CD8-positive, alpha-beta T cell (primary cell): ENCODE measurements at regions of chr2 and their contacts with region 1.

Region 1: GRCh38 chr2:219294356-219295351 is 14.5 kb downstream of the PTPRN start:
- DNase-seq: peak; percentile 79 to 94 (median 87)
- ATAC-seq: peak; percentile 94
- H3K4me3 ChIP-seq: peak overlapping the region; percentile 49
- H3K4me3 Mint-ChIP-seq: peak overlapping the region; percentile 72
- H3K27ac ChIP-seq: peak overlapping the region; percentile 14 to 59
- H3K27ac Mint-ChIP-seq: peak overlapping the region; percentile 86
- H3K4me1 ChIP-seq: peaks cover 39% of the 10 kb centered on the region
- H3K4me1 Mint-ChIP-seq: peaks cover 37% of the 10 kb centered on the region
- H3K27me3 ChIP-seq: peaks cover 0 to 2% of the 10 kb centered on the region in 2 experiments
- H3K27me3 Mint-ChIP-seq: peaks cover 2% of the 10 kb centered on the region
- CTCF ChIP-seq: peak; percentile 98

Region 2: GRCh38 chr2:219155054-219155644 is 139.5 kb before region 1 on chr2:
- CTCF ChIA-PET with region 1: interaction called, 101 read pairs
- POLR2A ChIA-PET with region 1: interaction called, 13 read pairs
- intact Hi-C with region 1: loop called (anchors 1 kb)
- DNase-seq: peak in 5 of 9 experiments; percentile 5 to 83 (median 52)
- ATAC-seq: peak; percentile 12
- H3K4me3 ChIP-seq: no peak overlapping the region
- H3K4me3 Mint-ChIP-seq: no peak overlapping the region
- H3K27ac ChIP-seq: no peak overlapping the region
- H3K27ac Mint-ChIP-seq: no peak overlapping the region
- H3K4me1 ChIP-seq: peaks cover 6% of the 10 kb centered on the region
- H3K4me1 Mint-ChIP-seq: peaks cover 7% of the 10 kb centered on the region
- H3K27me3 ChIP-seq: no peaks in the 10 kb centered on the region
- H3K27me3 Mint-ChIP-seq: no peaks in the 10 kb centered on the region
- CTCF ChIP-seq: peak; percentile 82

Region 3: DNA sequence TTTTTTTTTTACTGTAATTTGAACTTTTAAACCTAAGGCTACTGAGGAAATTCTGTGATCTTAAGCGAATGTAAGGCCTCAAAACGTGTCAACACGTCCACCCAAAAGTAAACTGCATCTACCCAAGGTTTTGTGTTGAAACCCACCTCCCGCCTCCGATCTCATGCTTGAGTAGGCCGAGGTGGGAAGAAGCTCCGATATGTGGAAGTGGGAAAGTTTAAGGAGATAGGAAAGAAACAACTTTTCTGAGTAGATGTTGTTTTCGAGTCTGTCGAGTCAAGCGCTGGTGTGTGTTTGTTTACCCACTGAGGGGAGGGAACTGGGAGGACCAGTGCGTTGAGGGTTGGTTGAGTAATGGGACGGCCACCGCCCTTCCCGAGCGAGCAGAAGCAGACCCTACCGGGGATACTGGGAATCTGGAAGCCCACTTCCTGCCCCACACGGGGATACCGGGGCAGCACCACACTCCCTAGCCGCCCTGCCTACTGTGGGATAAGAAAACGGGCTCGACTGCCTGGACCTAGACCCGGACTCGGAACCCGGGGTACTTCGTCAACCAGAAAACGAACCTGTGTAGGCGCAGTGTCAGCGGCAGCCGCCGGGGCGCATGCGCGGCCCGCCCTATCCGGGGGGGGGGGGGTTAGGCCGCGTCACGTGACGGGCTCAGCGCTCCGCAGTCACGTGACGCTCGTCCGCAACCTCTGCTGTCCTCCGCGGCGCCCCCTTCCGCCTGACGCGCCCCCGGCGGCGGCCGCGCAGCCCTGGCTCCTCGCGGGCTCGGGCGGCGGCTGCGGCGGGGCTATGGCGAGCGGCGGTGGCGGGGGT is 116.9 kb before region 1 on chr2 and contains the start of gene RETREG2:
- CTCF ChIA-PET with region 1: interaction called, 37 read pairs
- POLR2A ChIA-PET with region 1: interaction called, 4 read pairs
- intact Hi-C with region 1: loop called in 1 of 2 experiments (anchors 1 kb)
- DNase-seq: peak; percentile 61 to 96 (median 78)
- ATAC-seq: peak; percentile 55
- H3K4me3 ChIP-seq: peak within 1 kb of the TSS; percentile 71 to 82
- H3K4me3 Mint-ChIP-seq: peak within 1 kb of the TSS; percentile 91
- H3K27ac ChIP-seq: peak within 1 kb of the TSS; percentile 97 to 98
- H3K27ac Mint-ChIP-seq: peak within 1 kb of the TSS; percentile 99
- H3K4me1 ChIP-seq: peaks cover 75% of the 10 kb centered on the region
- H3K4me1 Mint-ChIP-seq: peaks cover 75% of the 10 kb centered on the region
- H3K27me3 ChIP-seq: no peaks in the 10 kb centered on the region
- H3K27me3 Mint-ChIP-seq: no peaks in the 10 kb centered on the region
- CTCF ChIP-seq: no peak
- total RNA-seq, gene RETREG2: 76.7 to 79.0 TPM

Region 4: DNA sequence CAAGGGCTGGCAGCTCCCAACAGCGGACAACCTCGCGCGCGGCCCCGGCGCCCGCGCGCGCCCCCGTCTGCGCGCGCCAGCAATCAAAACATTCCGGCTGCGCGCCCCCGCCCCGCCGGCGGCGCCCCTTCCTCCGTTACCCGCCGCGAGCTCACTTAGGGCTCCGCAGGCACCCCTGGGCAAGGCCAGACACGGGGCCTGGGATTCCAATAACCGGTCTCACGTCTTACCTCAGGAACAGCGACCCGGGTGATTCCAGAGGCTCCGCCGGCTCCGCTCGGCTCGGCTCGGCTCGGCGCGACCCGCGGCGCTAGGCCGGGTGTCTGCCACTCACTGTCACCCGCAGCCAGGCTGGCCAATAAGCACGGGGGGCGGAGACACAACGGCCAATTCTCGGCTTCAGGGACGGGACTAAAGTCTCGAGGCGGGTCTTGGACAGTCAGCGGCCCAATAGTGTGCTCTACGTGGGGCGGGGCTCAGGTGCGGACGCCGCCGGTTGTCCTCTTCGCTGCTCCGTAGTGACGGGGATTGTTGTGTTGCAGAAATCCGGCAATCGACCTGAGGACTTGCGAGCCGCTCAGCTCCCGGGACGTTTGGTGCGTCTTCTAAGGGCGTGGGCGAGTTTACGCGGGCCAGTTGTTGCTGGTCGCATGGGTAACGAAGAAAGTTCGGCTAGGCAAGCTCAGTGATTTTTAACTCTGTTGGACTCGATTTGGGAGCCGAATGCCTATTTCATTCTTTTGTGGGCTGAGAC is 65.2 kb before region 1 on chr2 and contains the starts of genes ANKZF1 and ATG9A:
- CTCF ChIA-PET with region 1: interaction called, 12 read pairs
- POLR2A ChIA-PET with region 1: interaction called, 22 read pairs
- intact Hi-C with region 1: loop called (anchors 2 to 5 kb)
- DNase-seq: peak; percentile 95 to 99 (median 98)
- ATAC-seq: peak; percentile 96
- H3K4me3 ChIP-seq: peak within 1 kb of the TSS; percentile 83 to 93
- H3K4me3 Mint-ChIP-seq: peak within 1 kb of the TSS; percentile 99
- H3K27ac ChIP-seq: peak within 1 kb of the TSS; percentile 79 to 95
- H3K27ac Mint-ChIP-seq: peak within 1 kb of the TSS; percentile 98
- H3K4me1 ChIP-seq: peaks cover 39% of the 10 kb centered on the region
- H3K4me1 Mint-ChIP-seq: peaks cover 58% of the 10 kb centered on the region
- H3K27me3 ChIP-seq: no peaks in the 10 kb centered on the region
- H3K27me3 Mint-ChIP-seq: no peaks in the 10 kb centered on the region
- CTCF ChIP-seq: no peak
- total RNA-seq, gene ANKZF1: 97.4 to 99.5 TPM
- total RNA-seq, gene ATG9A: 103 to 116 TPM

Region 5: GRCh38 chr2:219261024-219261855 is 33.4 kb before region 1 on chr2:
- CTCF ChIA-PET with region 1: interaction called, 28 read pairs
- POLR2A ChIA-PET with region 1: no interaction called
- intact Hi-C with region 1: no loop called
- DNase-seq: no peak
- ATAC-seq: no peak
- H3K4me3 ChIP-seq: no peak overlapping the region
- H3K4me3 Mint-ChIP-seq: no peak overlapping the region
- H3K27ac ChIP-seq: no peak overlapping the region
- H3K27ac Mint-ChIP-seq: no peak overlapping the region
- H3K4me1 ChIP-seq: peaks cover 6% of the 10 kb centered on the region
- H3K4me1 Mint-ChIP-seq: peaks cover 9% of the 10 kb centered on the region
- H3K27me3 ChIP-seq: no peaks in the 10 kb centered on the region
- H3K27me3 Mint-ChIP-seq: peaks cover 3% of the 10 kb centered on the region
- CTCF ChIP-seq: no peak

Region 6: DNA sequence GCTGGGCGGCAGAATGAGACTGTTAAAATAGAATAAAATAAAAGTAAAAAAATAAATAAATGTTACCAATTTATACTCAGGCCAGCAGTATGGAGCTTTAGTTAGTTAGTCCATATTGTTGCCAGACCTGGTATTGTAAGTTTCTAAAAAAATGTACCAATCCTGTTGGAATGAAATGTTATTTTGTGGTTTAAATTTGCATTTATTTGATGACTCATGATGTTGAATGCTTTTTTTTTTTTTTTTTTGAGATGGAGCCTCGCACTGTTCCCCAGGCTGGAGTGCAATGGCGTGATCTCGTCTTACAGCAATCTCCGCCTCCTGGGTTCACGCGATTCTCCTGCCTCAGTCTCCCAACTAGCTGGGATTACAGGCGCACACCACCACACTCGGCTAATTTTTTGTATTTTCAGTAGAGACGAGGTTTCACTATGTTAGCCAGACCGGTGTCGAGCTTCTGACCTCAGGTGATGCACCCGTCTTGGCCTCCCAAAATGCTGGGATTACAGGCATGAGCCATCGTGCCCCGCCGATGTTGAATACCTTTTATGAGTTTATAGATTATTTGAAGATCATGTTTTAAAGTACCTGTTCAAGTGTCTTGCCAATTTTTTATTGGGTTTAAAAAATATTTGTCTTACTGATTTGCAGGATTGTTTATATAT is 20.3 kb after region 1 on chr2:
- CTCF ChIA-PET with region 1: interaction called, 11 read pairs
- POLR2A ChIA-PET with region 1: no interaction called
- intact Hi-C with region 1: no loop called
- DNase-seq: no peak
- ATAC-seq: no peak
- H3K4me3 ChIP-seq: no peak overlapping the region
- H3K4me3 Mint-ChIP-seq: no peak overlapping the region
- H3K27ac ChIP-seq: no peak overlapping the region
- H3K27ac Mint-ChIP-seq: no peak overlapping the region
- H3K4me1 ChIP-seq: no peaks in the 10 kb centered on the region
- H3K4me1 Mint-ChIP-seq: peaks cover 1% of the 10 kb centered on the region
- H3K27me3 ChIP-seq: peaks cover 0 to 13% of the 10 kb centered on the region in 2 experiments
- H3K27me3 Mint-ChIP-seq: peaks cover 15% of the 10 kb centered on the region
- CTCF ChIP-seq: no peak